ENCODE measurements at regions of chr15 and their contacts with region 1.

Region 1: GRCh38 chr15:57205996-57206395 is 170.3 kb upstream of the CGNL1 start:
- DNase-seq: no peak
- ATAC-seq: no peak
- H3K4me3 ChIP-seq: no peak overlapping the region
- H3K27ac ChIP-seq: no peak overlapping the region
- H3K4me1 ChIP-seq: peaks cover 0 to 10% (median 4%) of the 10 kb centered on the region in 4 donors
- H3K27me3 ChIP-seq: no peaks in the 10 kb centered on the region
- CTCF ChIP-seq: no peak
- POLR2A ChIP-seq: no peak

Region 2: DNA sequence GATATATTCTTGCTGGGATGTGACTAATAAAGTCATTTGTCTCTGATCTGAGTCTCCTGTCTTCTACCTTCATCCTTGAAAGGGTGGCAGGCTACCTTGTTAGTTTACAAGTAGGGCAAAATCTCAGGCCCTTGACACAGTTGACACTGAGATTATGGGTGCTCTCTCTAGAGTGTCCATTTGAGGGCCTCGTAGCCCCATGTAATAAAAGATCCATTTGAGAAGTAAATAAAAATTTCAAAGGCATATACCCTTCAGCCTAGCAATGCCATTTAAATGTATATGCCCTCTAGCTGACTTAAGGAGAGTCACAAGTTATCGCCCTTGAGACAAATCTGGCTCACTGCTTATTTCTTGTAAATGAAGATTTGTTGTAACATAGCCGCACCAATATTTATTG is 189.0 kb before region 1 on chr15:
- intact Hi-C with region 1: no loop called
- DNase-seq: no peak
- ATAC-seq: no peak
- H3K4me3 ChIP-seq: no peak overlapping the region
- H3K27ac ChIP-seq: no peak overlapping the region
- H3K4me1 ChIP-seq: peaks cover 0 to 15% (median 8%) of the 10 kb centered on the region in 4 donors
- H3K27me3 ChIP-seq: no peaks in the 10 kb centered on the region
- CTCF ChIP-seq: peak in 1 of 4 donors; percentile 11
- POLR2A ChIP-seq: no peak

Region 3: GRCh38 chr15:57158589-57158988 is 47.4 kb before region 1 on chr15:
- intact Hi-C with region 1: loop called in 1 of 2 experiments (anchors 10 kb)
- DNase-seq: no peak
- ATAC-seq: peak; percentile 43 to 88 (median 58)
- H3K4me3 ChIP-seq: no peak overlapping the region
- H3K27ac ChIP-seq: no peak overlapping the region
- H3K4me1 ChIP-seq: peaks cover 0 to 8% (median 0%) of the 10 kb centered on the region in 4 donors
- H3K27me3 ChIP-seq: no peaks in the 10 kb centered on the region
- CTCF ChIP-seq: no peak
- POLR2A ChIP-seq: no peak

Region 4: GRCh38 chr15:57259568-57260040 is 53.6 kb after region 1 on chr15:
- intact Hi-C with region 1: no loop called
- DNase-seq: no peak
- ATAC-seq: no peak
- H3K4me3 ChIP-seq: no peak overlapping the region
- H3K27ac ChIP-seq: no peak overlapping the region
- H3K4me1 ChIP-seq: no peaks in the 10 kb centered on the region
- H3K27me3 ChIP-seq: no peaks in the 10 kb centered on the region
- CTCF ChIP-seq: no peak
- POLR2A ChIP-seq: no peak

Region 5: DNA sequence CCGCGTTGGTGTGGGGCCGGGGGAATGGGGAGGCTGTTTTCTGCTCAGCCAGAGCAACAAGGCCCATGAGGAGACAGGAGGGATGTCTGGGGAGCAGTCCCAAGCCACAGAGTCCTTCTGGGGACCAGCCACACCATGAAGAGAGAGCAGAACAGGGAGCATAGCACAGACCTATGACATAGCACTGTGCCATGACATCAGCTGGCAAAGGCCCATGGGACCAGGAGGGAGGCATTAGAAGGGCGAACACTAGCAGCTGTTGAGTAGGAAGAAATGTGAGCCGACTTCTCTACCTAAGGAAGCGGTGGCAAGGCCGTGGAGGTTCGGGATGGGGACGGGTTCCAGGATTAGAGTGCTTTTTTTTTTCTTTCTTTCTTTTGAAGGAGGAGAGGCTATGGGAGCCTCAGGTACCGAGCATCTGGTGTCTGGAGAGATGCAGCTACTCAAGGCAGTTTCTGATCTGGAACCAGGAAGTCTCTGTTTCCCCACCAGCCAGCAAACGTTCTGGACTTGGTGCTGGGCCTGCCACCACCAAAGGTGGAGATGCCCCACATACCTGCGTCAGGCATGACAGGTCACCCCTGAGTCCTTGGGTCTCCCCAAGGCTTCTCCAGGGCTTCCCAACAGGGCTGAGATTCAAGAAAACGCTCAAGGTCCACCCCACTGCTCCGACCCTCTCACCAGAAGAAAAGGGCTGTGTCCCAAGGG is 93.0 kb after region 1 on chr15:
- intact Hi-C with region 1: no loop called
- DNase-seq: no peak
- ATAC-seq: peak in 1 of 4 donors; percentile 8
- H3K4me3 ChIP-seq: no peak overlapping the region
- H3K27ac ChIP-seq: no peak overlapping the region
- H3K4me1 ChIP-seq: no peaks in the 10 kb centered on the region
- H3K27me3 ChIP-seq: no peaks in the 10 kb centered on the region
- CTCF ChIP-seq: no peak
- POLR2A ChIP-seq: no peak

Region 6: DNA sequence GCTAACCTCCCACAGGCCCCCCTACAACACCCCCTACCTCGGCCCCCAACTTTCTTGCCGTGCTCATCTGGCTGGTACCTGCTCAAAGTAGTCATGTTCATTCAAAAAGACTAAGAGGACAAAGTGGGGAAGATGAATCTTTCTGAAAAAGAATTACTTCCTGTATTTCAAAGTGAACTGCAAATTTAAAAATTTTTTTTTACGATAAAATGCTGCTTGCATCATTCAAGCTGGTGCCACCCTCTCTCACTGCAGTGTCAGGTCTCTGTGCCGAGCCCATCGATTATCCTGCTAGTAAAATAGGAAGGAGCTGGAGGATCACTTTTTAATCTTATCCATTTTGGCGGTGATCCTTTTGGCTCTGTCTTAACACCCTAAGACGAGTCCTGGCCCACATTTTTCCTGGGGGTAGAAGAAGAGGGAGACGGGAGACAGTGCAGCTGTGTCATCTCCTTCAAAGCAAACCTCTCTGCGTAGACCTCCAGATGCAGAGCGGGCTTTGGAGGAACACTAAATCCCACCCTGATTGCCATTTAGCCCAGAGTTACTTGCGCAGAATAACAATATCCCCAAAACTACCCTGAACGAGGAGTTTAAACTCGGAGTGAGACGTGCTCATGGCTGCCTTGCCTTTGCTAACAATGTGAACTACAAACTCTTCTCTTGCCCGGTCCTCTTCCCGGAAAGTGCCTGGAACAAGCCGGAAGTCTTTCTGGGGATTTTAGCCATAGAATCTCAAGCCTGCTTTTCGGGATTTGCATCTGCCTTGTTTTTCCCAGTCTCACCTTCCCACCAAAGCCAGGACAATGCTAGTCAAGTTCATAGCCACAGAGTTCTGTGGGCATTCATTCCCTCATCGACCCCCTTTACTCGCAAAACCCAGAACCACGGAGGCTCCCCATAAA is 104.1 kb after region 1 on chr15:
- intact Hi-C with region 1: no loop called
- DNase-seq: no peak
- ATAC-seq: no peak
- H3K4me3 ChIP-seq: no peak overlapping the region
- H3K27ac ChIP-seq: no peak overlapping the region
- H3K4me1 ChIP-seq: peaks cover 0 to 18% (median 5%) of the 10 kb centered on the region in 4 donors
- H3K27me3 ChIP-seq: no peaks in the 10 kb centered on the region
- CTCF ChIP-seq: no peak
- POLR2A ChIP-seq: no peak